ENCODE measurements at regions of chr16 and their contacts with region 1.

Region 1: GRCh38 chr16:89720813-89721545 is at the starts of genes VPS9D1 and ZNF276:
- DNase-seq: peak; percentile 71 to 92 (median 85)
- ATAC-seq: peak; percentile 45
- H3K4me3 ChIP-seq: peak within 1 kb of the TSS; percentile 86 to 98
- H3K4me3 Mint-ChIP-seq: peak within 1 kb of the TSS; percentile 96
- H3K27ac ChIP-seq: peak within 1 kb of the TSS; percentile 73 to 96
- H3K27ac Mint-ChIP-seq: peak within 1 kb of the TSS; percentile 99
- H3K4me1 ChIP-seq: peaks cover 38% of the 10 kb centered on the region
- H3K4me1 Mint-ChIP-seq: peaks cover 41% of the 10 kb centered on the region
- H3K27me3 ChIP-seq: no peaks in the 10 kb centered on the region
- H3K27me3 Mint-ChIP-seq: no peaks in the 10 kb centered on the region
- CTCF ChIP-seq: no peak
- total RNA-seq, gene VPS9D1: 15.7 to 15.9 TPM
- total RNA-seq, gene ZNF276: 127 to 130 TPM

Region 2: GRCh38 chr16:89633064-89633631 is 87.8 kb before region 1 on chr16:
- CTCF ChIA-PET with region 1: no interaction called
- POLR2A ChIA-PET with region 1: no interaction called
- intact Hi-C with region 1: no loop called
- DNase-seq: no peak
- ATAC-seq: no peak
- H3K4me3 ChIP-seq: no peak overlapping the region
- H3K4me3 Mint-ChIP-seq: no peak overlapping the region
- H3K27ac ChIP-seq: no peak overlapping the region
- H3K27ac Mint-ChIP-seq: no peak overlapping the region
- H3K4me1 ChIP-seq: no peaks in the 10 kb centered on the region
- H3K4me1 Mint-ChIP-seq: no peaks in the 10 kb centered on the region
- H3K27me3 ChIP-seq: no peaks in the 10 kb centered on the region
- H3K27me3 Mint-ChIP-seq: no peaks in the 10 kb centered on the region
- CTCF ChIP-seq: no peak

Region 3: DNA sequence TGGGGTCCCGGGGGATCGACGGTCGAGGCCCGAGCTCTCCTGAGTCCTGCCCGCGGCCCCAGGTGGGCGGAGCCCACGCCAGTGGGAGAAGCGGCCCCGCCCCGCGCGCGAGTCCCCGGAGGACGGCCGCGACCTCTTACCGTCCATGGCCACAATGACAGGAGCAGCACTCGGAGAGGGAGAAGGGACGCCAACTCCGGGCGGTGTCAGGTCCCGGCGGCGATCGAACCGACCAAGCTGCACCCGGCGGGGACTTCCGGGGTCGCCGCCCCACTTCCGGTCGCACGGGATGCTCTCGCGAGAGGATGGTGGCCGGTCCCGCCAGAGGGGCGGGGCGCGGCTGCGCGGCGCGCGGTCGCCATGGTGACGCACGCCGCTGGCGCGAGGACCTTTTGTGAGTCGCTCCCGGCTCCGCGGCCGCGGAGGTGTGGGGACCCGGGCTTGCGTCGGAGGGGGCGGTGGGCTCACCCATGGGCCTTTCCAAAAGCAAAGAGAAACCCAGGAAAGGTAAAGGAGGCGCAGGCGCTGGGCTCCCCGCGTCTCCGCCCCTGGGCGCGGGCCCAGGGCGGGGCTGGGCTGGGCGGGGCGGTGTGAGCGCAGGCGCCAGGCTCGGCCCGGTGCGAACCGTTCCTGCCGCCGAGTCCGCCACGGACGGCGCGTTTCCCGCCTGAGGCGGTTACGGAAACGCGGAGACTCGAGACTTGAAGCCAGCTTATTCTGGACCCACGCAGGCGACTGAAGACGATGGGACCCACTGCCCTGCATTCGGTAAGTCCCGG is 63.3 kb before region 1 on chr16 and contains the starts of genes CHMP1A and SPATA33:
- CTCF ChIA-PET with region 1: no interaction called
- POLR2A ChIA-PET with region 1: no interaction called
- intact Hi-C with region 1: loop called in 1 of 2 experiments (anchors 1 kb)
- DNase-seq: peak; percentile 85 to 97 (median 91)
- ATAC-seq: peak; percentile 88
- H3K4me3 ChIP-seq: peak within 1 kb of the TSS; percentile 73 to 91
- H3K4me3 Mint-ChIP-seq: peak within 1 kb of the TSS; percentile 80
- H3K27ac ChIP-seq: peak within 1 kb of the TSS; percentile 81 to 85
- H3K27ac Mint-ChIP-seq: peak within 1 kb of the TSS; percentile 64
- H3K4me1 ChIP-seq: peaks cover 19% of the 10 kb centered on the region
- H3K4me1 Mint-ChIP-seq: peaks cover 29% of the 10 kb centered on the region
- H3K27me3 ChIP-seq: no peaks in the 10 kb centered on the region
- H3K27me3 Mint-ChIP-seq: no peaks in the 10 kb centered on the region
- CTCF ChIP-seq: no peak
- total RNA-seq, gene CHMP1A: 82.9 to 90.8 TPM
- total RNA-seq, gene SPATA33: 4.8 to 5.1 TPM

Region 4: DNA sequence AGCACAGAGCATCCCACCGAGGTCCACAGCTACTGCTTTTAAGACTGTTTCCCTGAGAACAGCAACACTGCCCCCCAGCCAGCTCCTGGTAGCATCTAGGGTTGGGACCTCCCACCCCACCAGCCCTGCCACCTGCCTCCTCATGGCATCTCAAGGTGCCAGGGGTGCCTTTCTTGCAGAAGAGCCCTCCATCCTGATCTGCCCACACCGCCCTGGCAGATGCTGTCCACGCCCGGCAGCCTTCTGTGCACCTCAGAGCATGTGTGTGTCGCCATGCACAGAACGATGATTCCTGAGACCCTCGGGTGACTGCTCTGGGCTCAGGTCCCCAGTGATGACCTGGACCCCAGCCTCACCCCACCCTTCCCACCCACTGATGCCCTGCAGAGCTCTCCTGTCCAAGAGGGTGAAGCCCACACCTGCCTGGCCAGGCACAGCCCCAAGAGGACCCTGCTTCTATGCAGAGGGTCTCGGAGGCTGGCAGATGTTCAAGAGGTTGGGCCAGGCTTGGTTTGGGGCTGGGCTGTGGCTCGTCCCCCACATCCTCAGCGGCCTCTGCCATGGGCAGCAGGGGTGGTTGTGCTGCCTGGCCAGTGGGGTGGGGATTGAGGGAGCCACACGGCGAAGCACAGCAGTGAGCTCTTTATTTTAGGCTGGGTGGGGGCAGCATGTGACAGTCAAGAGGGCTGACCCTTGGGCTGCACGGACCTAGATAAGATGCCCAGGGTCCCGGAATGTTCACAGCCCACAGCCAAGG is 14.3 kb before region 1 on chr16:
- CTCF ChIA-PET with region 1: interaction called, 33 read pairs
- POLR2A ChIA-PET with region 1: interaction called, 22 read pairs
- intact Hi-C with region 1: loop called (anchors 1 kb)
- DNase-seq: peak in 1 of 9 experiments; percentile 20
- ATAC-seq: no peak
- H3K4me3 ChIP-seq: no peak overlapping the region
- H3K4me3 Mint-ChIP-seq: no peak overlapping the region
- H3K27ac ChIP-seq: no peak overlapping the region
- H3K27ac Mint-ChIP-seq: no peak overlapping the region
- H3K4me1 ChIP-seq: peaks cover 16% of the 10 kb centered on the region
- H3K4me1 Mint-ChIP-seq: peaks cover 12% of the 10 kb centered on the region
- H3K27me3 ChIP-seq: no peaks in the 10 kb centered on the region
- H3K27me3 Mint-ChIP-seq: no peaks in the 10 kb centered on the region
- CTCF ChIP-seq: no peak

Region 5: DNA sequence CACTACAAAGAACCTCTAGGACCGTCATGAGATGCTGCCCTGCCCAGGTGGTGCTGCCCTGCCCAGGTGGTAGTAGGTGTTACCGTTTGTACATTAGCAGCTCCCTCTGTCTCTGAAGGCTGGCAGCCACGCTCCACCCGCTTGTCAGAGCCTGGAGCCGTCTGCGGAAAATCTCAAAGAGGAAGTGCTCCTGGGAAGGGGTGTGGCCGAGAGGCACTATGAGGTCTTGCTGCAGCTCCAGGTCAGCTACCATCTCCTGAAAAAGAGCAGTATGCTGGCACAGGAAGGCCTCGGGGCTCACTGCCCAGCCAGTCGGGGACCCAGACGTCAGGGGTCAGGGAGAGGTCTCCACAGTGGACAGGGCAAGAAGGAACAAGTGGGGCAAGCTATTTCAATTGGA is 28.7 kb after region 1 on chr16:
- CTCF ChIA-PET with region 1: no interaction called
- POLR2A ChIA-PET with region 1: interaction called, 114 read pairs
- intact Hi-C with region 1: no loop called
- DNase-seq: no peak
- ATAC-seq: no peak
- H3K4me3 ChIP-seq: no peak overlapping the region
- H3K4me3 Mint-ChIP-seq: no peak overlapping the region
- H3K27ac ChIP-seq: no peak overlapping the region
- H3K27ac Mint-ChIP-seq: no peak overlapping the region
- H3K4me1 ChIP-seq: peaks cover 27% of the 10 kb centered on the region
- H3K4me1 Mint-ChIP-seq: peaks cover 15% of the 10 kb centered on the region
- H3K27me3 ChIP-seq: no peaks in the 10 kb centered on the region
- H3K27me3 Mint-ChIP-seq: no peaks in the 10 kb centered on the region
- CTCF ChIP-seq: no peak

Region 6: DNA sequence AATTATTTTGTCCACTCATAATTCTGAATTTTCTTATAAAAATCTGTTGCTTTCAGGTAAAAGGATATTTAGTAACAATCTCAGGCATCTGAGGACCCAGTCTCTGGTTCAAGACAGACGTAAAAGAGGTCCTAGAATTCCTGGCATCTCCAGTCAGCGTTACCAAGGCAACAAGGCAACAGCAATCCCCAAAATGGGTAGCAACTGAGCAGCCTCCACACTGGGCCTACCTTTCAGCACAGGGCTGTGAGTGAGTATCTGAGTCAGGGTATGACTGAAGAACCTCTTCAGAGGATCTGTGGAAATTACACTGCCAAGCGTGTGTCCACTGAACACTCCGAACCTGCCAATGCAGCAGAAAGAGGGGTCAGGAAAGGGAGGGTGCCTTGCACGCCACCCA is 74.7 kb after region 1 on chr16:
- CTCF ChIA-PET with region 1: interaction called, 12 read pairs
- POLR2A ChIA-PET with region 1: interaction called, 4 read pairs
- intact Hi-C with region 1: no loop called
- DNase-seq: no peak
- ATAC-seq: no peak
- H3K4me3 ChIP-seq: no peak overlapping the region
- H3K4me3 Mint-ChIP-seq: no peak overlapping the region
- H3K27ac ChIP-seq: no peak overlapping the region
- H3K27ac Mint-ChIP-seq: no peak overlapping the region
- H3K4me1 ChIP-seq: no peaks in the 10 kb centered on the region
- H3K4me1 Mint-ChIP-seq: peaks cover 13% of the 10 kb centered on the region
- H3K27me3 ChIP-seq: no peaks in the 10 kb centered on the region
- H3K27me3 Mint-ChIP-seq: no peaks in the 10 kb centered on the region
- CTCF ChIP-seq: no peak

Region 7: DNA sequence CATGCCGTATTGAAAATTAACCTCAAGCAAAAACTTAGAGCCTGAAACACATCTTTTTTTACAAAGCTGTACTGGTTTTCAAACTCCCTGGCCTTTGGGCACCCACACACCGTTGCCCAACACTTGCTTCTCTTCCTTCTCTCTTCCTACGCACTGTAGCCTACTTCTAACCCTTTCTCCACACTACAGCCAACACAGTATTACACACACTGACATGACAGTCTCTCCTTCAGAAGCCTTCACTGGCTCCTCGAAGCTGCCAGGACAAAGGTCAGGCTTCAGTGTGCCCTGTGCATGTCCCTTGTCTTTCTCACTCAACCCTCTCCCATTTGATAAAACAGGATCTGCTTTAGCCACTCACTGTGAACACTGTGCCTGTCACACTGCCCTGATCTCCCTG is 87.5 kb after region 1 on chr16:
- CTCF ChIA-PET with region 1: no interaction called
- POLR2A ChIA-PET with region 1: no interaction called
- intact Hi-C with region 1: no loop called
- DNase-seq: no peak
- ATAC-seq: no peak
- H3K4me3 ChIP-seq: no peak overlapping the region
- H3K4me3 Mint-ChIP-seq: no peak overlapping the region
- H3K27ac ChIP-seq: no peak overlapping the region
- H3K27ac Mint-ChIP-seq: no peak overlapping the region
- H3K4me1 ChIP-seq: no peaks in the 10 kb centered on the region
- H3K4me1 Mint-ChIP-seq: no peaks in the 10 kb centered on the region
- H3K27me3 ChIP-seq: no peaks in the 10 kb centered on the region
- H3K27me3 Mint-ChIP-seq: no peaks in the 10 kb centered on the region
- CTCF ChIP-seq: no peak

Region 8: DNA sequence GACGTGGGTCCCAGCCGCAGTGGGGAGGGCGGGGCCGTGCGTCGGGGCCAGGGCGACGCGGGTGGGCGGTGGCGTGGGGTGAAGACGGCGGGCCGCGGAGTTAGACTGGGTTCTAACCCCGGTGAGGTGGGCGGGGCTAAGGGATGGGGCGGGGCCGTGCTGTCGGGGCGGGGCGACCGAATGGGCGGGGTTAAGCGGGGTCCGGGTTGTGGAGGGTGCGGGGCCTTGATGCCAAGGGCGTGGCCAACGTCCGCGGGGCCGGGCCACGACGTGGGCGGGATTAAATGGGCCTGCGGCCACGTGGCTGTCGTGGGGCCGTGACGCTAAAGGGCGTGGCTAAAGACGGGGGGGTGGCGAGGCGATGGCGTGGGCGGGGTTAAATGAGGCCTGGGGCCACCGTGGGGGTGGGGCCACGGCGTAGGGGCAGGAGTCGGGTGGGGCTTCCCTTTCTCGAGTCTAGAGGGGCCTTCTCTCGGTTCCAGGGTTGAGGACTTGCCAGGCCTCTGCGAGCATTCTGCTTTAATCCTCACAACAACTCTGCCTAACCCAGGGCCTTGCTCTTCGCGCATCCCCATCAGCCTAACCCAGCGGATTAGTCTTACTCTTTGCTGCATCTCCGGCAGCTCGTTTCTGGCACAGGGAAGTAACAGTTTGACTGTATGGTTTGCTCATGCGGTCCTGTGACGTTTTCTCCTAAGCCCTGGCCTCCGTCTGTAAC is 153.2 kb after region 1 on chr16:
- CTCF ChIA-PET with region 1: interaction called, 3 read pairs
- POLR2A ChIA-PET with region 1: no interaction called
- intact Hi-C with region 1: loop called (anchors 1 kb)
- DNase-seq: peak; percentile 86 to 99 (median 96)
- ATAC-seq: peak; percentile 77
- H3K4me3 ChIP-seq: peak overlapping the region; percentile 98
- H3K4me3 Mint-ChIP-seq: peak overlapping the region; percentile 90
- H3K27ac ChIP-seq: peak overlapping the region; percentile 100
- H3K27ac Mint-ChIP-seq: peak overlapping the region; percentile 99
- H3K4me1 ChIP-seq: peaks cover 23% of the 10 kb centered on the region
- H3K4me1 Mint-ChIP-seq: peaks cover 19% of the 10 kb centered on the region
- H3K27me3 ChIP-seq: no peaks in the 10 kb centered on the region
- H3K27me3 Mint-ChIP-seq: no peaks in the 10 kb centered on the region
- CTCF ChIP-seq: no peak

Region 9: DNA sequence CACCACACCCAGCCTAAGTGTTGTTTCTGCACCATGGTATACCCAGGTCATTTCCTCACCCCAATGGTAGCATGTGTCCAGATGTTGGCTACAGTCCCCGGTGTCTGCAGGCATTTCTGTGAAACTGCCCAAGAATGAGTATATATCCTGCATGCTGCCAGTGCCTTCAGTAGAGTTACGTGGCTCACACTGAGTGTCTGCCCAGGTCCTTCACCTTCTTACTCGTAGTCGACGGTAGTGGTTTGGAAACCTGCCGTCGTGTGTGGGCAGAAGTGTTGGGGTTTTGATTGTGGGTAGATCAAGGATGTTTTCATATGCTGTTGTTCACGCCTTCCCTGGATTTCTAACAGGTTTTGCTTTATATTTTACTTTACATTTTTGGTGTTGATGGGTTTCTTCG is 169.2 kb after region 1 on chr16:
- CTCF ChIA-PET with region 1: no interaction called
- POLR2A ChIA-PET with region 1: no interaction called
- intact Hi-C with region 1: no loop called
- DNase-seq: peak in 1 of 9 experiments; percentile 46
- ATAC-seq: peak; percentile 24
- H3K4me3 ChIP-seq: no peak overlapping the region
- H3K4me3 Mint-ChIP-seq: no peak overlapping the region
- H3K27ac ChIP-seq: no peak overlapping the region
- H3K27ac Mint-ChIP-seq: peak overlapping the region; percentile 39
- H3K4me1 ChIP-seq: peaks cover 5% of the 10 kb centered on the region
- H3K4me1 Mint-ChIP-seq: peaks cover 16% of the 10 kb centered on the region
- H3K27me3 ChIP-seq: no peaks in the 10 kb centered on the region
- H3K27me3 Mint-ChIP-seq: no peaks in the 10 kb centered on the region
- CTCF ChIP-seq: no peak

Measured in CD8-positive, alpha-beta T cell (primary cell).